ENCODE measurements at regions of chr16 and their contacts with region 1.

Region 1: DNA sequence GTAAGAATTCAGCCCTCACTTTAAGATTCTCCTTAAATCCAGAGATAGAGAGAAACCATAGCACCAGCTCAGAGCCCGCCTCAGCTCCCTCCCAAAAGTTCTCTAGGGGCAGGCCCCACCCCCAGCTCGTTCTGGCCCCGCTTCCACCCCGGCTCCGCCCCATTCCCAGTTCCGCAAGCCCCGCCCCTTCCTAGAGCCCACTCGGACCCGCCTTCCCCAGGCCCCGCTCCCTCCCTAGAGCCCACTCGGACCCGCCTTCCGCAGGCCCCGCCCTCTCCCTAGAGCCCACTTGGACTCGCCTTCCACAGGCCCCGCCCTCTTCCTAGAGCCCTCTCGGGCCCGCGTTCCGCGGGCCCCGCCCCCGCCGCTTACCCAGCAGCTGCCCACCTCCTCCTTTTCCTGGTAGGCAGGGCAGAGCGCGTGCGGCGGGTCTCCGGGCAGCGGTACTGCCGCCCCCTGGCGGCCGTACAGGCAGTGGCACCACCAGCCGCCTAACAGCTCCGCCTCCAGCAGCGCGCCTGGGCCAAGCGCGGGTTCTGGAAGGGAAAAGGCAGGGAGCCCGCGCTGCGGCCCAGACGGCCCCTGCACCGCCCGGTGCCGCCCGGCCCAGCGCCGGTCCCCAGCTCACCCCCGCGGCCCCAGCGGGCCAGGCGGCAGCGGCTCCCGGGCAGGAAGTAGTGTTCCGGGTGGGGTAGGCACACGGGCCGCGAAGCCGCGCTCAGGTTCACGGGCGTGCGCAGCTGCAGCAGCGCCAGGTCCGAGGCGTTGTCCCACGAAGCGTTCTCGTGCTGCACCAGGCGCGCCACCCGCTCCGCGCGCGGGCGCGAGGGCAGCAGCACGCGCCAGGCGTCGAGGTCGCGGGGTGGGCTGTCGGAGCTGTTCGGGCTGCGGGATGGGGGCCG is 6.8 kb upstream of the PRSS8 start:
- DNase-seq: peak; percentile 100
- ATAC-seq: peak; percentile 91
- H3K4me3 Mint-ChIP-seq: peak overlapping the region; percentile 63
- H3K27ac Mint-ChIP-seq: peak overlapping the region; percentile 91
- H3K4me1 Mint-ChIP-seq: peaks cover 33% of the 10 kb centered on the region
- H3K27me3 Mint-ChIP-seq: peaks cover 41% of the 10 kb centered on the region
- CTCF ChIP-seq: peak; percentile 94

Region 2: DNA sequence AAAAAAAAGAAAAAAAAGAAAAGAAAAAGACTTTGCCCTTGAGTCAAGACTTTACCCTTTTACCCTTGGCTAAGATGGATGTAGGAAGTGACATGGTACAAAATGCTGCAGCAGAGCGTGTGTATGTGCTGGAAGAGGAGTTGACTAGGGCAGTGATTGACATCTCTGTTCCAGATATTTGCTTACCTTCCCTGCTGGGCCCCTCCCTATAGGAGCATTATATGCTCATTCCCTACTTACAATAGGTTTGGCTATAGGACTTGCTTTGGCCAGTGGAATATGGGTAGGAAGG is 98.2 kb before region 1 on chr16:
- CTCF ChIA-PET with region 1: interaction called, 11 read pairs
- POLR2A ChIA-PET with region 1: interaction called, 6 read pairs
- DNase-seq: no peak
- ATAC-seq: no peak
- H3K4me3 Mint-ChIP-seq: no peak overlapping the region
- H3K27ac Mint-ChIP-seq: no peak overlapping the region
- H3K4me1 Mint-ChIP-seq: peaks cover 5% of the 10 kb centered on the region; the same call in 1 of the 2 replicates
- H3K27me3 Mint-ChIP-seq: peaks cover 5% of the 10 kb centered on the region; the same call in 1 of the 2 replicates
- CTCF ChIP-seq: no peak

Region 3: GRCh38 chr16:31073968-31074813 is 68.2 kb before region 1 on chr16 and contains the starts of genes ZNF646 and ZNF668:
- CTCF ChIA-PET with region 1: interaction called, 22 read pairs
- POLR2A ChIA-PET with region 1: interaction called, 11 read pairs
- DNase-seq: peak; percentile 97
- ATAC-seq: peak; percentile 86
- H3K4me3 Mint-ChIP-seq: peak within 1 kb of the TSS; percentile 99
- H3K27ac Mint-ChIP-seq: peak within 1 kb of the TSS; percentile 95
- H3K4me1 Mint-ChIP-seq: peaks cover 19% of the 10 kb centered on the region
- H3K27me3 Mint-ChIP-seq: no peaks in the 10 kb centered on the region
- CTCF ChIP-seq: no peak
- total RNA-seq, gene ZNF646: 26.7 to 29.3 TPM (median 29.1 TPM) in 3 replicates
- total RNA-seq, gene ZNF668: 13.5 to 17.3 TPM (median 16.6 TPM) in 3 replicates

Region 4: DNA sequence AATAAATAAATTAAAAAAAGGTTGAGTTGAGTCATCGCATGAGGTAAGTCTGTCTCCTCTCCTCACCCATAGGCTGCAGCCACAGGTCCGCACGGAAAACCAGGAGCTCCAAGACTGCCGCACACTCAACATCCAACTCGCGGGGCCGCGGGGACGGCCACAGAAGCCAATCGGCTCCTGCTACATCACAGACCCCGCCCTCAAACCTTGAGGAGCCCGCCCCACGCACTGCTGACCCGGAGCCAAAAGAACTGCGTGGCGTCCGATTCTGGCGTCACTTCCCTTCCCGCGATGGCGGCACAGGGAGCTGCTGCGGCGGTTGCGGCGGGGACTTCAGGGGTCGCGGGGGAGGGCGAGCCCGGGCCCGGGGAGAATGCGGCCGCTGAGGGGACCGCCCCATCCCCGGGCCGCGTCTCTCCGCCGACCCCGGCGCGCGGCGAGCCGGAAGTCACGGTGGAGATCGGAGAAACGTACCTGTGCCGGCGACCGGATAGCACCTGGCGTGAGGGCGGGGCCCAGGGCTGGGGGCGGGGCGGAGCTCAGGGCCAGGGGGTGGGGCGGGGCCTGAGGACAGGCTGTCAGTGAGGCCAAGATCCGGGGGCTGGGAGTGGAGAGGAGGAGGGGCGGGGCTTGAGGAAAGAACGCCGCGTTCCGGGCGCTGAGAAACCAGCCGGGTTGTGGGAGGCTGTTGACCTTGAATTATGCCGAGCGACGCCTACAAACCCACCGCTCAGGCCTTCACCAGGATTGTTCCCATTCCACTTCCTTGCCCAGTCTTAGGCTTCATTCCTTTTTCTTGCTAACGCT is 24.8 kb before region 1 on chr16 and contains the start of gene KAT8:
- CTCF ChIA-PET with region 1: interaction called, 58 read pairs
- POLR2A ChIA-PET with region 1: interaction called, 37 read pairs
- DNase-seq: peak; percentile 96
- ATAC-seq: peak; percentile 93
- H3K4me3 Mint-ChIP-seq: peak within 1 kb of the TSS; percentile 83
- H3K27ac Mint-ChIP-seq: peak within 1 kb of the TSS; percentile 80
- H3K4me1 Mint-ChIP-seq: peaks cover 16% of the 10 kb centered on the region
- H3K27me3 Mint-ChIP-seq: no peaks in the 10 kb centered on the region
- CTCF ChIP-seq: no peak
- total RNA-seq, gene KAT8: 65.7 to 70.8 TPM (median 69.8 TPM) in 3 replicates

Region 5: GRCh38 chr16:31157136-31157535 is 14.8 kb after region 1 on chr16:
- CTCF ChIA-PET with region 1: interaction called, 38 read pairs
- POLR2A ChIA-PET with region 1: no interaction called
- DNase-seq: no peak
- ATAC-seq: no peak
- H3K4me3 Mint-ChIP-seq: no peak overlapping the region
- H3K27ac Mint-ChIP-seq: no peak overlapping the region
- H3K4me1 Mint-ChIP-seq: no peaks in the 10 kb centered on the region
- H3K27me3 Mint-ChIP-seq: no peaks in the 10 kb centered on the region
- CTCF ChIP-seq: no peak

Region 6: GRCh38 chr16:31202414-31203375 is 60.3 kb after region 1 on chr16 and contains the start of gene PYCARD:
- CTCF ChIA-PET with region 1: interaction called, 23 read pairs
- POLR2A ChIA-PET with region 1: interaction called, 5 read pairs
- DNase-seq: peak; percentile 57
- ATAC-seq: peak; percentile 11
- H3K4me3 Mint-ChIP-seq: peak within 1 kb of the TSS; percentile 83
- H3K27ac Mint-ChIP-seq: no peak within 1 kb of the TSS; the same call in 1 of the 2 replicates
- H3K4me1 Mint-ChIP-seq: peaks cover 23% of the 10 kb centered on the region
- H3K27me3 Mint-ChIP-seq: peaks cover 26% of the 10 kb centered on the region
- CTCF ChIP-seq: no peak
- total RNA-seq, gene PYCARD: 35.2 to 45.5 TPM (median 42.4 TPM) in 3 replicates

Region 7: DNA sequence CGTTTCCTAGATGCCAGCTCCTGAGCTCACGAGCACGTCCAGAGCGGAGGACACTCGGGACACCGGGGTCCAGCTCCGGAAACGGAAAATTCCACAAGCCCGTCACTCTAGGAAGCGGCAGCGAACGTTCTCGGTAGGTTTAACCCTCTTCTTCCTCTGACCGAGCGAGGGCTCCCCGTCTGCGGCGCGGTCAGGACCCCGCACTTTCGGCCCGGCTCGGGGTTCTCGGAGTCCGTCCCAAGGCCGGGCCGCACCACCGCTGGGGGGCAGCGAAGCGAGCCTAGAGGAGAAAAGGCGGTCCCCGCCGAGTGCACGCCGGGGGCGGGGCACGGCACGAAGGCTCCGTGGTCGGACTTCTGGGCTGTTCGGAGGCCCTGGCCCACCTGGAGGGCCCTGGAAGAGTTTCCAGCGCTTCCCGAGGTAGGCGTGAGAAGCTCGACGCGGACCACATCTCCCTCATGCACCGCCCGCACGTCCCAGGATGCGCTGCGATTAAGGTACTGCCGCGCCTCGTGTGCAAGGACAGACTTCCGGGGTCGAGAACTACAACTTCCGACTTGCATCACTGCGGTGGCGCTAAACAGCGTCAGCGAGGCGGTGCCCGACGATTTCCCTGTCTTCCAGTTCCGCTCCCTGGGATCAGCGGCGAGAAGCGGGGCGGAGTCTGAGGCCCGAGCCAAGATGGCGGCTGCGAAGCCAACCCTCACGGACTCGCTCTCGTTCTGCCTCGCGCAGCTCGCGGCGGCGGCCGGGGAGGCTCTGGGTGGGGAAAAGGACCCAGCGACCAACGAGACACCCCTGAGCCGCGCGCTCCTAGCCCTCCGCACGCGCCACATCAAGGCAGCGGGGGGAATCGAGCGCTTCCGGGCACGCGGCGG is 316.7 kb after region 1 on chr16 and contains the start of gene ARMC5:
- CTCF ChIA-PET with region 1: interaction called, 23 read pairs
- POLR2A ChIA-PET with region 1: no interaction called
- DNase-seq: peak; percentile 97
- ATAC-seq: peak; percentile 77
- H3K4me3 Mint-ChIP-seq: peak within 1 kb of the TSS; percentile 88
- H3K27ac Mint-ChIP-seq: peak within 1 kb of the TSS; percentile 93
- H3K4me1 Mint-ChIP-seq: peaks cover 29% of the 10 kb centered on the region
- H3K27me3 Mint-ChIP-seq: no peaks in the 10 kb centered on the region
- CTCF ChIP-seq: no peak
- total RNA-seq, gene ARMC5: 11.3 to 13.2 TPM (median 13.0 TPM) in 3 replicates